Caco-2 (cell line): ENCODE measurements at regions of chr16 and their contacts with region 1.

Region 1: GRCh38 chr16:15765880-15766279 is 90.9 kb downstream of the MYH11 start:
- DNase-seq: peak in 1 of 2 experiments; percentile 53
- H3K4me3 ChIP-seq: no peak overlapping the region
- H3K4me3 Mint-ChIP-seq: no peak overlapping the region
- H3K27ac Mint-ChIP-seq: no peak overlapping the region
- H3K4me1 ChIP-seq: no peaks in the 10 kb centered on the region
- H3K4me1 Mint-ChIP-seq: no peaks in the 10 kb centered on the region
- H3K27me3 ChIP-seq: no peaks in the 10 kb centered on the region
- H3K27me3 Mint-ChIP-seq: peaks cover 6% of the 10 kb centered on the region
- CTCF ChIP-seq: peak; percentile 71 to 74

Region 2: GRCh38 chr16:15822957-15823356 is 57.1 kb after region 1 on chr16:
- CTCF ChIA-PET with region 1: no interaction called
- POLR2A ChIA-PET with region 1: no interaction called
- intact Hi-C with region 1: loop called (anchors 1 kb)
- DNase-seq: no peak
- H3K4me3 ChIP-seq: no peak overlapping the region
- H3K4me3 Mint-ChIP-seq: no peak overlapping the region
- H3K27ac Mint-ChIP-seq: no peak overlapping the region
- H3K4me1 ChIP-seq: no peaks in the 10 kb centered on the region
- H3K4me1 Mint-ChIP-seq: no peaks in the 10 kb centered on the region
- H3K27me3 ChIP-seq: no peaks in the 10 kb centered on the region
- H3K27me3 Mint-ChIP-seq: peaks cover 3% of the 10 kb centered on the region
- CTCF ChIP-seq: no peak

Region 3: DNA sequence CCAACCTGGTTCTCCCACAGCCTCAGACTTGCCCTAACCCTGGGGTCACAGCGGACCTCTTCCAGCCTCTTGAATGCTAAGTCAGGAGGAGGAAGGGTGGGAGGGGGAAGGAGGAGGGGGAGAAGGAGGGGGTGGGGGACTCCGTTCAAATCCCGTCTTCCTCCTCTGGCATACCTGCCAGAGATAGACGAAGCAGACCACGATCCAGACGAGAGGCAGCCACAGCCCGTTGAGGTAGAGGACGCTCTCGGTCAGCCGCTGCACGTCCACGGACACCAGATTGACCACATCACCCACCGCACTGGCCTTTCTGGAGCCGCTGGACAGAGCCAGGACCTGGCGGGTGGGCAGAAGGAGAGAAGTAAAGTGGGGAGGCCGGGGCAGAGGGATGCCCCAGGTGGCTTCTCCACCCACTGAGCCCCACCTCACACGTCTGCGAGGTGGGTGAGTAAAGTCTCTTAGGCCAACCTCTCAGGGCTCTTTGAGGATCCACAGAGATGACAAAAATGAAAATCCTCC is 432.0 kb after region 1 on chr16:
- CTCF ChIA-PET with region 1: no interaction called
- POLR2A ChIA-PET with region 1: no interaction called
- intact Hi-C with region 1: loop called (anchors 5 kb)
- DNase-seq: no peak
- H3K4me3 ChIP-seq: no peak overlapping the region
- H3K4me3 Mint-ChIP-seq: no peak overlapping the region
- H3K27ac Mint-ChIP-seq: no peak overlapping the region
- H3K4me1 ChIP-seq: no peaks in the 10 kb centered on the region
- H3K4me1 Mint-ChIP-seq: no peaks in the 10 kb centered on the region
- H3K27me3 ChIP-seq: no peaks in the 10 kb centered on the region
- H3K27me3 Mint-ChIP-seq: no peaks in the 10 kb centered on the region
- CTCF ChIP-seq: no peak